A549 (cell line): ENCODE measurements at regions of chr12 and their contacts with region 1.

Region 1: DNA sequence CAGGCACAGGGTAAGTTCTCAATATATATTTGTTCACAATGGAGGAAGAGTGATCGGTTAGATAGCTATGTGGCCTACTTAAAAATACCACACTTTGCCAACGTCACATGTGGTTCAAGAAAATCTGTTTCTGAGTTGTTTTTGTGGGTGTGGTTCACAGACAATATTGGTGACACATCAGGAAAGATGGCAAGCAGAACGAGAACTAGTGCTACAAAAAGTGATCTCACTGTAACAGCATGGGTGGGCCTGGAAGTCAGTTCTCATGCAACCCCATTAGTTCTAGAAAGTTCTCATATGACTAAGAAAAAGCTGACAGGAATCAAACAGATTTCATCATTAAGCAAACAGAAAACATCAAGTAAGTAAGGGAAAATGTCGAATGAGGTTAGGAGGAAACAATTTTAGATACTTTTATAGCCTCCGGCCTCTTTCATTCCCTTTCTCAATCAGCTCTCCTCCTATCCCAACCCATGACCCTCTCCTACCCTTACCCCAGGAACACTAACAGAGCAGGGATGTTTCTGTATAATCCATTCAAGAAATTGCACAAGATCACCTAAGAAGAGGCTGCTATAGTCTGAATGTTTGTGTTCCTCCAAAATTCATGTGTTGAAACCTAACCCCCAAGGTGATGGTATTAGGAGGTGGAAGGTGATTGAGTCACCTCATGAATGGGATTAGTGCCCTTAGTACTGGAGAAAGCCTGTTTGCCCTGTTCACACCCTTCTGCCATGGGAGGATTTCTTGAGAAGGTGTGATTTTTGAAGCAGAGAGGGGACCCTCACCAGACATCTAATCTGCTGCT is 15.5 kb upstream of the NTN4 start:
- DNase-seq: peak; percentile 89 to 100
- ATAC-seq: peak; percentile 88 to 93
- H3K4me3 ChIP-seq: no peak overlapping the region
- H3K27ac ChIP-seq: peak overlapping the region; percentile 90 to 98
- H3K4me1 ChIP-seq: peaks cover 62% of the 10 kb centered on the region
- CTCF ChIP-seq: no peak
- EP300 ChIP-seq: peak; percentile 100
- POLR2A ChIP-seq: no peak
- RAD21 ChIP-seq: peak in 1 of 2 experiments; percentile 28; a peak in 4 of 5 replicates

Region 2: GRCh38 chr12:95365912-95366311 is 440.2 kb before region 1 on chr12:
- CTCF ChIA-PET with region 1: no interaction called
- POLR2A ChIA-PET with region 1: no interaction called
- DNase-seq: no peak
- ATAC-seq: no peak
- H3K4me3 ChIP-seq: no peak overlapping the region
- H3K27ac ChIP-seq: no peak overlapping the region
- H3K4me1 ChIP-seq: no peaks in the 10 kb centered on the region
- CTCF ChIP-seq: no peak
- EP300 ChIP-seq: no peak
- POLR2A ChIP-seq: no peak
- RAD21 ChIP-seq: no peak

Region 3: GRCh38 chr12:95790033-95790911 is 15.8 kb before region 1 on chr12 and contains the start of gene NTN4:
- CTCF ChIA-PET with region 1: interaction called, 7 read pairs
- POLR2A ChIA-PET with region 1: interaction called, 40 read pairs
- DNase-seq: peak; percentile 33 to 65
- ATAC-seq: peak; percentile 57 to 72
- H3K4me3 ChIP-seq: peak within 1 kb of the TSS; percentile 82
- H3K27ac ChIP-seq: peak within 1 kb of the TSS; percentile 97 to 99
- H3K4me1 ChIP-seq: peaks cover 72% of the 10 kb centered on the region
- CTCF ChIP-seq: no peak
- EP300 ChIP-seq: no peak
- POLR2A ChIP-seq: peak; percentile 35; the same call in 1 of the 2 replicates
- RAD21 ChIP-seq: no peak
- polyA plus RNA-seq, gene NTN4: 132 and 168 TPM in 2 replicates

Region 4: GRCh38 chr12:95838125-95838524 is 32.1 kb after region 1 on chr12:
- CTCF ChIA-PET with region 1: no interaction called
- POLR2A ChIA-PET with region 1: interaction called, 12 read pairs
- DNase-seq: peak in 1 of 2 experiments; percentile 90
- ATAC-seq: peak; percentile 44 to 59; a peak in 5 of 6 replicates
- H3K4me3 ChIP-seq: peak overlapping the region; percentile 7; the same call in 2 of the 3 replicates
- H3K27ac ChIP-seq: peak overlapping the region; percentile 80 to 87
- H3K4me1 ChIP-seq: peaks cover 49% of the 10 kb centered on the region
- CTCF ChIP-seq: no peak
- EP300 ChIP-seq: 0 out of 5 replicates have a peak, but pooled peaks of 1 of the 2 experiments have one; percentile 19
- POLR2A ChIP-seq: no peak; the same call in 1 of the 2 replicates
- RAD21 ChIP-seq: no peak

Region 5: DNA sequence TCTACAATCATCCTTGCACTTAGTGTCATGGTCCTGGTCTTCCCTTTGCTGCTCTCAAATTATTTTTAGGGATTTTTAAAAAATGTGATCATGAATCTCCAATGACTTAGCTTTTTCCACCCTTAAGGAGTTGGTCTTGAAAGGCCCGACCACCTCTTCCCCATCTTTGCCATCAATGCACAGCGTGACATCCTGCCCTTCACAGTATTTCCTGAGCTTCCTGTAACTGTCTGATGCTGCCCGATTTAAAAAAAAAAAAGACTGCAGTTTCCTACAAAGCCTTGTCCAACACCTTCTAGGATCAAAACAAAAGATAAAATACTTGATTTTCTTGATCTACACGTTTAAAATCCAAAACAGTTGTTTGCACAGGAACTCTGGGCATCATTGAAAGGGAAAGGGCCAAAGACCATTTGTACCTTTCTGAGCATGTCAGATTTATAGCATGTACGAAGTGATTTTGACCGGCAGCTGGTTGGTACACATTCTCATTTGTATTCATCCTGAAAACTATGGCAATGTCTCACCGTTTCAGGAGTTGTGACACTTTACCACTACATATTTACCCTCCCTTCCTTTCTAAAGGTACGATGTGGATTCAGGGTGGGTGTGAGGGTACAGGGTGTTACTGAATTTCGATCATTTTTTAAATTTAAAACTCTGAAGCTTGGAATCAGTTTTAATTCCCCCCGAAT is 380.7 kb after region 1 on chr12:
- CTCF ChIA-PET with region 1: no interaction called
- POLR2A ChIA-PET with region 1: no interaction called
- DNase-seq: no peak
- ATAC-seq: no peak
- H3K4me3 ChIP-seq: no peak overlapping the region
- H3K27ac ChIP-seq: no peak overlapping the region
- H3K4me1 ChIP-seq: no peaks in the 10 kb centered on the region
- CTCF ChIP-seq: no peak
- EP300 ChIP-seq: no peak
- POLR2A ChIP-seq: no peak
- RAD21 ChIP-seq: no peak